ENCODE measurements at regions of chr10 and their contacts with region 1.

Region 1: GRCh38 chr10:112314822-112315474 is 31.7 kb downstream of the TECTB start:
- DNase-seq: peak; percentile 83 to 89
- H3K4me3 ChIP-seq: no peak overlapping the region
- H3K27ac ChIP-seq: no peak overlapping the region
- H3K4me1 ChIP-seq: no peaks in the 10 kb centered on the region
- H3K27me3 ChIP-seq: no peaks in the 10 kb centered on the region
- CTCF ChIP-seq: peak; percentile 73 to 91 (median 84)
- POLR2A ChIP-seq: no peak

Region 2: GRCh38 chr10:112140110-112140970 is 174.6 kb before region 1 on chr10:
- intact Hi-C with region 1: loop called (anchors 10 kb)
- DNase-seq: peak; percentile 55 to 58
- H3K4me3 ChIP-seq: no peak overlapping the region
- H3K27ac ChIP-seq: no peak overlapping the region
- H3K4me1 ChIP-seq: no peaks in the 10 kb centered on the region
- H3K27me3 ChIP-seq: no peaks in the 10 kb centered on the region
- CTCF ChIP-seq: peak; percentile 26 to 79 (median 48)
- POLR2A ChIP-seq: no peak

Region 3: GRCh38 chr10:112177247-112177646 is 137.7 kb before region 1 on chr10:
- intact Hi-C with region 1: loop called (anchors 10 kb)
- DNase-seq: no peak
- H3K4me3 ChIP-seq: no peak overlapping the region
- H3K27ac ChIP-seq: peak overlapping the region in 1 of 3 donors; percentile 15
- H3K4me1 ChIP-seq: peaks cover 0 to under 1% of the 10 kb centered on the region in 2 donors
- H3K27me3 ChIP-seq: no peaks in the 10 kb centered on the region
- CTCF ChIP-seq: no peak
- POLR2A ChIP-seq: no peak

Region 4: GRCh38 chr10:112446855-112447711 is 132.1 kb after region 1 on chr10 and contains the starts of genes VTI1A and ZDHHC6:
- intact Hi-C with region 1: no loop called
- DNase-seq: peak; percentile 80 to 85
- H3K4me3 ChIP-seq: peak within 1 kb of the TSS; percentile 78 to 96 (median 86)
- H3K27ac ChIP-seq: peak within 1 kb of the TSS; percentile 73 to 86 (median 85)
- H3K4me1 ChIP-seq: peaks cover 12 to 17% of the 10 kb centered on the region in 2 donors
- H3K27me3 ChIP-seq: no peaks in the 10 kb centered on the region
- CTCF ChIP-seq: peak in 1 of 6 experiments; percentile 10
- POLR2A ChIP-seq: peak in 1 of 2 donors; percentile 51
- total RNA-seq, gene VTI1A: 49.3 to 84.5 (median 61.2) TPM
- total RNA-seq, gene ZDHHC6: 26.5 to 39.2 (median 34.1) TPM

Region 5: GRCh38 chr10:112763916-112764520 is 449.1 kb after region 1 on chr10:
- intact Hi-C with region 1: no loop called
- DNase-seq: no peak
- H3K4me3 ChIP-seq: no peak overlapping the region
- H3K27ac ChIP-seq: no peak overlapping the region
- H3K4me1 ChIP-seq: no peaks in the 10 kb centered on the region
- H3K27me3 ChIP-seq: no peaks in the 10 kb centered on the region
- CTCF ChIP-seq: no peak
- POLR2A ChIP-seq: no peak

Measured in thyroid gland (tissue), 4 donors.